ENCODE measurements at regions of chr17 and their contacts with region 1.

Region 1: GRCh38 chr17:38485146-38485468 is 56.8 kb downstream of the ARHGAP23 start:
- DNase-seq: no peak
- H3K4me3 ChIP-seq: no peak overlapping the region
- CTCF ChIP-seq: no peak

Region 2: GRCh38 chr17:38421171-38421841 is 63.8 kb before region 1 on chr17:
- CTCF ChIA-PET with region 1: interaction called, 30 read pairs
- POLR2A ChIA-PET with region 1: interaction called, 3 read pairs
- DNase-seq: peak; percentile 78
- H3K4me3 ChIP-seq: peak overlapping the region; percentile 20
- CTCF ChIP-seq: no peak

Region 3: DNA sequence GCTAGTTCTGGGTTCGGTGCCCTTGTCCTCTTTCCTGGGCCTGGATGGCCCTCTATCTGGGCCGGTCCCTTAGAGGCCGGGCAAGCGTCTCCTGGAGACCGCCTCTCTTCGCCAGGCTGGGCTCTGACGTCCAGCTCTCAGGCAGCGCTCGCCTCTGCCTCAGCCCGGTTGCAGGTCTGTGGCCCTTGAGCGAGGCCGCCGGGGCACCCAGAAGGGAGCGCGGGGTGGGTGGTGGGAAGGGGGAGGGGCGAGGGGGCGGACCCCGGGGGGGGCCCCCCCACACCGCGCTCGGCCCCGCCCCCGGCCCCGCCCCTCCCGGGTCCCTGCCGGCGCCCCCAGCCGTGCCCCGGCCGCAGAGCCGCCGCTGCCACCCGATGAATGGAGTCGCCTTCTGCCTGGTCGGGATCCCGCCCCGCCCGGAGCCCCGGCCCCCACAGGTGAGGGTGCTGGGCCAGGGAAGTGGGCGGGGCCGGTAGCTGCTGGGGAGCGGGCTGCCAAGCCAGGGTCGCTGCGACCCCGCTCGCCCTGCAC is 56.9 kb before region 1 on chr17 and contains the start of gene ARHGAP23:
- CTCF ChIA-PET with region 1: interaction called, 30 read pairs
- POLR2A ChIA-PET with region 1: no interaction called
- DNase-seq: no peak
- H3K4me3 ChIP-seq: peak within 1 kb of the TSS; percentile 74
- CTCF ChIP-seq: no peak

Region 4: DNA sequence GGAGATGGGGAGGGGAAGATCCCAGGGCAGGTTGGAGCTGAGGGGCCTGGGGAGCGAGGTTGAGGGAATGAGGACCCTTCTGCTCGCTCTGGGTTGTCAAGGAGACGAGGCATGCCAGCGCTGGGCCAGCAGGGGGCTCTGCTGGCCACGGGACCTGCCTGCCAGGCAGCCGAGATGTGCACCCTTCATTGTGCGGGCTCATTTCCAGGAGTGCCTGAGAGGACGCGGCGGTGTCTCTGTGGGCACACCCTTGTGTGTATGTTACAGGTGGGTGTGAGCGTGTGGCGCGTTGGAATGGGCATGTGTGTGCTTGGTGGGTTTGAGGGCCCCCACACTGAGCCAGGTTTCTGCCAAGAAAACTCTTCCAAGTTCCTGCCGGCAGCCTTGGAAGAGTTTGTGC is 41.0 kb before region 1 on chr17:
- CTCF ChIA-PET with region 1: interaction called, 21 read pairs
- POLR2A ChIA-PET with region 1: no interaction called
- DNase-seq: no peak
- H3K4me3 ChIP-seq: no peak overlapping the region
- CTCF ChIP-seq: peak; percentile 97

Region 5: GRCh38 chr17:38469875-38470274 is 15.2 kb before region 1 on chr17:
- CTCF ChIA-PET with region 1: interaction called, 12 read pairs
- POLR2A ChIA-PET with region 1: no interaction called
- DNase-seq: no peak
- H3K4me3 ChIP-seq: no peak overlapping the region
- CTCF ChIP-seq: no peak

Region 6: GRCh38 chr17:38509008-38509771 is 24.1 kb after region 1 on chr17:
- CTCF ChIA-PET with region 1: interaction called, 15 read pairs
- POLR2A ChIA-PET with region 1: no interaction called
- DNase-seq: peak; percentile 66
- H3K4me3 ChIP-seq: no peak overlapping the region
- CTCF ChIP-seq: peak; percentile 89

Region 7: DNA sequence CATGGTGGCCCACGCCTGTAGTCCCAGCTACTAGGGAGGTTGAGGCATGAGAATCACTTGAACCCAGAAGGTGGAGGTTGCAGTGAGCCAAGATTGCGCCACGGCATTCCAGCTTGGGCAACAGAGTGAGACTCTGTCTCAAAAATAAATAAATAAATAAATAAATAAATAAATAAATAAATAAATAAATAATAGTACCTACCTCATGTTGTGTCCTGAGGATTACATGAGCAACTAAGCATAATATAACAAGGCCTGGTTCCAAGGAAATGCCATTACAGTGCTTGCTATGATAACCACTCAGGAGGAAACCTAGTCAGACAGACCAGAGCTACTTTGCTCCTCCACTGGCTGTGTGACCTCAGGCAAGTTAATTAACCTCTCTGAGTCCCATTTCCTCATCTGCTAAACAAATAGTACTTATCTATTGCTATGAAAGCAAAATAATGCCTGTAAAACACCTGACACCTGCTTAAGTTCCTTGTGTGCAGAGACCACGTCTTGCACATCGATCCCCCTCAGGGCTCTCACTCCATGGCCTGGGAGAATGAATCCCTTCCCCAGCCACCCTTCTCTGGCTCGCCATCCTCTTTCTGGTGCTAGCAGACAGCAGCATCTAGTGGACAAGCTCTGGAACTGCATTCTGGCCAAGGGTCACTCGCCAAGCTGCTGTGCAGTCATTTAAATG is 182.1 kb after region 1 on chr17:
- CTCF ChIA-PET with region 1: interaction called, 42 read pairs
- POLR2A ChIA-PET with region 1: no interaction called
- DNase-seq: no peak
- H3K4me3 ChIP-seq: no peak overlapping the region
- CTCF ChIP-seq: peak; percentile 98

Measured in AG04449 (cell line).